Activated CD4-positive, alpha-beta T cell treated with anti-CD3 and anti-CD28 coated beads for 36 hours (primary cell): ENCODE measurements at regions of chr5 and their contacts with region 1.

Region 1: GRCh38 chr5:43305948-43306565 is 7.2 kb downstream of the HMGCS1 start:
- DNase-seq: no peak
- ATAC-seq: peak; percentile 37
- H3K4me3 Mint-ChIP-seq: peak overlapping the region; percentile 12
- H3K27ac Mint-ChIP-seq: peak overlapping the region; percentile 63
- H3K4me1 Mint-ChIP-seq: peaks cover 80% of the 10 kb centered on the region
- H3K27me3 Mint-ChIP-seq: no peaks in the 10 kb centered on the region

Region 2: DNA sequence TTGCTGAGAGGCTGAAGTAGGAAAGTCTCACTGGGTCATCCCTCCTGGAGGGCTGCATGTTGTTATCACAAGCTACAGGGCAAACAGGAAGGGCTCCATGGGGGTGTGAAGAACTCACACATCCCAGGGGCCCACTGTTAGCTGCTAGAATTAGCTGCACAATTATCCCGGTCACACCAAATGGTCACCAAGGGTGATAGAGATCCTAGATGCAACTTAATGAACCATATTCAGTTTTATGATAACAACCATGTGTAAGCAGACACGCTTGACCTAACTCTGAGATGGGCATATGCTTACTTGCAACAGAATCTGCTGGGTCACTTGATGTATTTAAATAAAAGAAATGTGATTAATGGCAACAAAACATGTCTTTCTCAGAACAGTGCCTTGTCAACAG is 1949.3 kb before region 1 on chr5:
- CTCF ChIA-PET with region 1: no interaction called
- POLR2A ChIA-PET with region 1: no interaction called
- intact Hi-C with region 1: no loop called
- DNase-seq: no peak
- ATAC-seq: no peak
- H3K4me3 Mint-ChIP-seq: no peak overlapping the region
- H3K27ac Mint-ChIP-seq: no peak overlapping the region
- H3K4me1 Mint-ChIP-seq: no peaks in the 10 kb centered on the region
- H3K27me3 Mint-ChIP-seq: no peaks in the 10 kb centered on the region

Region 3: GRCh38 chr5:43073597-43074546 is 232.2 kb before region 1 on chr5:
- CTCF ChIA-PET with region 1: interaction called, 4 read pairs
- POLR2A ChIA-PET with region 1: no interaction called
- intact Hi-C with region 1: loop called in 1 of 2 experiments (anchors 2 kb)
- DNase-seq: peak; percentile 69
- ATAC-seq: peak; percentile 78
- H3K4me3 Mint-ChIP-seq: no peak overlapping the region
- H3K27ac Mint-ChIP-seq: no peak overlapping the region
- H3K4me1 Mint-ChIP-seq: peaks cover 38% of the 10 kb centered on the region
- H3K27me3 Mint-ChIP-seq: no peaks in the 10 kb centered on the region

Region 4: DNA sequence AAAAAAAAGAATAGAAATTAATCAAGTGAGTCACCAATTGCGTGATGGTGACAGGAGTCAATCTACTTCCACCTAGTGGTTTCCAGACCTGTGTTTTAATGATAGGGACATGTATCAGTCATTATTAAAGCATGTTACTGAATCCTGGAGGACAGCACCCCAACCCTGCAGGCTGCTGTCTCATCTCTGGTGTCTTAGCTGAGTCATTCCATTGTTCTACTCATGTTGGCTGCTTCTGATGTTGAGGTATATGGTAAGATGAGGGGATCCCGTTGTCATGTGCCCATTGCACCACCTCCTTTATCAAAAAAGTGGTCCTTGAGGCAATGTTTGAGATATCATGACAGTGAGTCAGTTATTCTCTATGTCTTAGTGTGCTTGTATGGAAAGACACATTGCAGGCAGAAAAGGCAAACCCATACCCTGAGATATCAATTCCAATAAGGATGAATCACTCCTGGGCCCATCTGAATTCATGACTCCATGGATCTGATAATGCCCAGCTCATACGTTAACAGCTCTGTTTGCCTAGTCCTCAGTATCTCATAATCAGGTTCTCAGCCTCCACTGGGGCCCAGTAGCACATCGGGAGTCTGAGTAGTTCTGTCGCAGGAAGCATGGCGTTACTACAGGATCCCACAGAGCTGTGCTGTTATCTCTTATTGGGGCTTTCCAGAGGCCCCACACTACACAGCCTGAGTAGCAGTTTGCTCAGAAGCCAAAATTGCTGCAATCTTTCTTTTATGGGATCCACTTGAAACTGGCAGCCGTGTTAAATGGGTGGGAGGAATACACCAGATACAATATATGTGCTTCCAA is 24.0 kb before region 1 on chr5:
- CTCF ChIA-PET with region 1: interaction called, 3 read pairs
- POLR2A ChIA-PET with region 1: no interaction called
- intact Hi-C with region 1: loop called (anchors 1 to 2 kb)
- DNase-seq: peak; percentile 43
- ATAC-seq: peak; percentile 81
- H3K4me3 Mint-ChIP-seq: no peak overlapping the region
- H3K27ac Mint-ChIP-seq: no peak overlapping the region
- H3K4me1 Mint-ChIP-seq: peaks cover 11% of the 10 kb centered on the region
- H3K27me3 Mint-ChIP-seq: peaks cover 4% of the 10 kb centered on the region

Region 5: GRCh38 chr5:43336159-43336558 is 30.1 kb after region 1 on chr5:
- CTCF ChIA-PET with region 1: no interaction called
- POLR2A ChIA-PET with region 1: no interaction called
- intact Hi-C with region 1: loop called in 1 of 2 experiments (anchors 1 kb)
- DNase-seq: peak; percentile 45
- ATAC-seq: peak; percentile 87
- H3K4me3 Mint-ChIP-seq: no peak overlapping the region
- H3K27ac Mint-ChIP-seq: peak overlapping the region; percentile 80
- H3K4me1 Mint-ChIP-seq: peaks cover 16% of the 10 kb centered on the region
- H3K27me3 Mint-ChIP-seq: peaks cover 30% of the 10 kb centered on the region

Region 6: DNA sequence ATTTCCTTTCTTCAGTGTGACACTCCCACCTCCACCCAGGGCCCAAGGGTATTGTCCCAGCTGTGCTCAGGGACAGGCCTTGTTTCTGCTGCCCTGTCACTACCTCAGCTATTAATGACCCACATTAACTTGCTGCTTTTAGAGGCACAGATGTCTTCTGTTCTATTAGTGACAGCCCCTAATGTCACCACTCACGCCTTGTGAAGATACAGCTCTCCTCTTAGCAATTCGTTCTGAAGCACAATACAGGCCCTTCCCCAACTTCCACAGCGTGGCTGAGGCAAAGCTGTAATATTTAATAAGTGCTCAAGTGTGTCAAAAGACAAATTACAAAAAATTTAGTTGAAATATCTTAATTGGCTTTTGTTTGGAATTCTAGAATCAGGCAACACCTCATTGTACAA is 51.8 kb after region 1 on chr5:
- CTCF ChIA-PET with region 1: no interaction called
- POLR2A ChIA-PET with region 1: no interaction called
- intact Hi-C with region 1: no loop called
- DNase-seq: no peak
- ATAC-seq: no peak
- H3K4me3 Mint-ChIP-seq: no peak overlapping the region
- H3K27ac Mint-ChIP-seq: no peak overlapping the region
- H3K4me1 Mint-ChIP-seq: no peaks in the 10 kb centered on the region
- H3K27me3 Mint-ChIP-seq: no peaks in the 10 kb centered on the region